ENCODE measurements at regions of chr5 and their contacts with region 1.

Region 1: GRCh38 chr5:159262859-159263567 is at the start of gene UBLCP1:
- DNase-seq: peak; percentile 42
- H3K4me3 ChIP-seq: peak within 1 kb of the TSS; percentile 79 to 96 (median 93)
- H3K27ac ChIP-seq: peak within 1 kb of the TSS; percentile 90 to 97 (median 96)
- H3K4me1 ChIP-seq: peaks cover 9 to 22% (median 12%) of the 10 kb centered on the region in 3 donors
- H3K27me3 ChIP-seq: peaks cover 0 to 7% (median 0%) of the 10 kb centered on the region in 4 donors
- CTCF ChIP-seq: no peak
- POLR2A ChIP-seq: peak in 2 of 4 donors; percentile 53 to 60
- total RNA-seq, gene UBLCP1: 19.0 to 34.9 (median 24.6) TPM

Region 2: GRCh38 chr5:159156426-159157238 is 106.4 kb before region 1 on chr5:
- intact Hi-C with region 1: loop called (anchors 10 kb)
- DNase-seq: no peak
- H3K4me3 ChIP-seq: no peak overlapping the region
- H3K27ac ChIP-seq: peak overlapping the region in 1 of 4 donors; percentile 42
- H3K4me1 ChIP-seq: peaks cover 0 to 8% (median 3%) of the 10 kb centered on the region in 3 donors
- H3K27me3 ChIP-seq: no peaks in the 10 kb centered on the region
- CTCF ChIP-seq: peak; percentile 81 to 89 (median 84)
- POLR2A ChIP-seq: no peak

Region 3: DNA sequence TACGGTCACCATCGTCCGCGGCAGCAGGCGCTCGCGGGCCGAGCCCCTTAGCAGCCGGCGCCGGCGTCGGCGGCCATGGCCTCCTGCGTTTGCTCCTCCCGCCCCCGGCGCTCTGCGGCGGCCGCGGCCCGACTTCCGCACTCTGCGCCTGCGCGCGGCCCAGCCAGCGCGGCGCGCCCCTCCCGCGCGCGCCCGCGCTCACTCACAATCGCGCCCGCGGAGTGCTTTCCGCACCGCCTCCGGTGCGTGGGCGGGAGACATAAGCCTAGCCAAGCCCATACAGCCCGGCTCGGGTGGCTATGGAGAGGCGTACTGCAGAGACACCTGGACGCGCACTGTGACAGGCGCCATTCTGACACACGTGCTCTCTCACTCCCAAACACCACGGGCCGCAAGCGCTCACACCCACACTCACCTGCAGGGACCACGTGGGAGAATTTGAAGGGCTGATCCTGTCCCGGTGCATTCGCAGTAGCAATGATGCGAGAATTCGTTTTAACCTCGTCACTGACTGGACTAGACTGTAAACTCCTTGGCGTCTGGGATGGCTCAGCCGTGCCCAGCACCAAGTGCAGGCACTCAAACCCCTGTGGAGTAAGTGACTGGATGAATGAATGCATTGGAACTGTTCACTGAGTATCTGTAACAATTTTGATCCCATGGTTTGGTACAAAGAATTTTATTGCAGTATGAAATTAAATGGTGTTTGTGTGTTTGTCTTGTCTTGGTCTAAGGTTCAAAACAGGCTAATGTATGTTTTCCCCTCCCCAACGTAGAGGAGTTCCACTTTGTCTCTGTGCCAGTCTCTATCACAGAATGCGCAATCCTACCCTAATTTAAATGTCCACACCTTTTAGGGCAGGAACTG is 53.3 kb before region 1 on chr5 and contains the start of gene RNF145:
- intact Hi-C with region 1: loop called (anchors 5 kb)
- DNase-seq: peak; percentile 74
- H3K4me3 ChIP-seq: peak within 1 kb of the TSS; percentile 94 to 99 (median 96)
- H3K27ac ChIP-seq: peak within 1 kb of the TSS; percentile 98 to 99 (median 98)
- H3K4me1 ChIP-seq: peaks cover 25 to 63% (median 30%) of the 10 kb centered on the region in 3 donors
- H3K27me3 ChIP-seq: no peaks in the 10 kb centered on the region
- CTCF ChIP-seq: peak in 1 of 6 experiments; percentile 13
- POLR2A ChIP-seq: peak in 3 of 4 donors; percentile 52 to 69 (median 64)
- total RNA-seq, gene RNF145: 49.7 to 82.3 (median 72.3) TPM

Measured in esophagus squamous epithelium (tissue), 5 donors.